ENCODE measurements at regions of chr13 and their contacts with region 1.

Region 1: DNA sequence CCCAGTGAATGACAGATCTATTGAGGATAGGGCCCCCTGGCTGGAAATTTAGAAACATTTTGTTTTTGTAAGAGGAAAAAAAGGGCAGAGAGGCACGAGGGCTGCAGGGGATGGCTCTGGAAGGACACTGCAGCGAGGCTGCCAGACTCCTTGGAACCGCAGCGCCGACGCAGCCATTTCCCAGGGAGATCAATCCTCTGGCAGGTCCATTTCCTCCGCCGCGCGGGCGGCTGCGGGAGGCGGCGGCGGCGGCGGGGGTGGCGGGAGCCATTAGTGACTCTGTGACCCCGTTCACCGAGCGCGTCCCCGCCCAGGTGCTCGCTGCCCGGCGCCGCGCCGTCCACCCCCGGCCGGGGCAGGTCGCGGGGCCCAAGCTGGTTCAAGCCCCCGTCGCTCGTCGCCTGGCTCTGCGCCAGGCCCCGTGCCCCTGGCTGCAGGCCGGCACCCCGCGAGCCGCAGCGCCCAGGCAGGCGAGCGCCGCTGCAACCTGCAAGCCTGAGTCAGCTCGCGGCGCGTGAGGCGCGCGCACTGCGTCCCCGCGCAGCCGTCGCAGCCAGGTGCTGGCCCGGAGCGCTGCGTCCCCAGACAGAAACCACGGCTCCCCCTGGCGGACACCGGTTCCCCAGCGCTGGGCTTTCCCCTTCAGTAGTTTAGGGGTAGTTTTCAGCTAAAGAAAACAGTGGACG is 192.6 kb downstream of the KATNAL1 start:
- DNase-seq: peak; percentile 94
- ATAC-seq: peak; percentile 85

Region 2: GRCh38 chr13:29508130-29508875 is 606.4 kb before region 1 on chr13:
- intact Hi-C with region 1: loop called (anchors 10 kb)
- DNase-seq: peak; percentile 91
- ATAC-seq: peak; percentile 86

Region 3: DNA sequence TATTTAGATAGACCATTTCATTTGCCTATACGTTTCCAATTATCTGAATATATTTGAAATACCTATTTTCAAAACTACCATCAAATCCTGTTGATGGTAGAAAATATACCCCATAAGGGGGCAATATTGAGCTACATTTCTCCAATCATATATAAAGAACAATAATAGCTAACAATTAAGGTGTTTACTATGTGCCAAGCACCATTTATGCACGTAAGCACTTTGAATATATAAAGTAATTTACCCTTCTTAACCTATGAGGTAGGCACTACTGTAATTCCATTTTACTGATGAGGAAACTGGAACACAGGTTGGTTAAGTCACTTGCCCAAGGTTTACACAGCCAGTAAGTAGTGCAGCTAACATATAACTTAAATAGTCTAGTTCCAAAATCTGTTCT is 343.5 kb before region 1 on chr13:
- intact Hi-C with region 1: loop called (anchors 5 kb)
- DNase-seq: no peak
- ATAC-seq: no peak

Region 4: GRCh38 chr13:29849731-29850223 is 264.9 kb before region 1 on chr13:
- intact Hi-C with region 1: loop called (anchors 5 kb)
- DNase-seq: peak; percentile 74
- ATAC-seq: peak; percentile 53